Right ventricle myocardium superior (tissue), 1 donor: ENCODE measurements at regions of chr16 and their contacts with region 1.

Region 1: GRCh38 chr16:27367461-27368357 is 34.3 kb upstream of the IL21R start:
- DNase-seq: peak; percentile 88
- ATAC-seq: peak; percentile 93

Region 2: DNA sequence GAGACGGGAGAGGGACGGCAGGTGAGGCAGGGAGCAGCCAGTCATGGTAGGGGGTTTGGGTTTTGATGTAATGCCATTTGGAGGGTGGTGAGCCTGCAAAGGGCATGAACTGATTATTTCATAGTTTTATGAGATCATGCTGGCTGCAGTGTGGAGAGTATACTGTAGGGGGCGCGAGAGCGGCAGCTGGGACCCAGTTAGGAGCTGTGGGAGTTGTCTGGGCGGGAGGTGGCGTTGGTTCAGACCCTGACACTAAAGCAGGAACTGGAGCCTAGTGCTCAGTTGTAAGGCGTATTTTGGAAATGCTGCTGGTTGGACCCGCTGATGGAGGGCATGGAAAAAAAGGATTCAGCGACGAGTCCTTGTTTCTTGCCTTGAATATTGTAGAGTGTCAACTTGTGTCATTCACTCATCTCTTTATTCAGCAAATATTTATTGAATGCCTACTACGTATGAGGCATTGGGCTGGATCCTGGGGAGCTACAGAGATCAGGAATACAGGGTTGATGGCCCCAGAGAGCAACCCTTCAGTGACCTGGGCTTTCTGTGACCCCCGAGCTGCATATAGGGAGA is 188.1 kb before region 1 on chr16:
- intact Hi-C with region 1: loop called (anchors 2 kb)
- DNase-seq: peak; percentile 93
- ATAC-seq: peak; percentile 99

Region 3: GRCh38 chr16:27235055-27235937 is 132.4 kb before region 1 on chr16:
- intact Hi-C with region 1: loop called (anchors 5 kb)
- DNase-seq: peak; percentile 92
- ATAC-seq: peak; percentile 76

Region 4: DNA sequence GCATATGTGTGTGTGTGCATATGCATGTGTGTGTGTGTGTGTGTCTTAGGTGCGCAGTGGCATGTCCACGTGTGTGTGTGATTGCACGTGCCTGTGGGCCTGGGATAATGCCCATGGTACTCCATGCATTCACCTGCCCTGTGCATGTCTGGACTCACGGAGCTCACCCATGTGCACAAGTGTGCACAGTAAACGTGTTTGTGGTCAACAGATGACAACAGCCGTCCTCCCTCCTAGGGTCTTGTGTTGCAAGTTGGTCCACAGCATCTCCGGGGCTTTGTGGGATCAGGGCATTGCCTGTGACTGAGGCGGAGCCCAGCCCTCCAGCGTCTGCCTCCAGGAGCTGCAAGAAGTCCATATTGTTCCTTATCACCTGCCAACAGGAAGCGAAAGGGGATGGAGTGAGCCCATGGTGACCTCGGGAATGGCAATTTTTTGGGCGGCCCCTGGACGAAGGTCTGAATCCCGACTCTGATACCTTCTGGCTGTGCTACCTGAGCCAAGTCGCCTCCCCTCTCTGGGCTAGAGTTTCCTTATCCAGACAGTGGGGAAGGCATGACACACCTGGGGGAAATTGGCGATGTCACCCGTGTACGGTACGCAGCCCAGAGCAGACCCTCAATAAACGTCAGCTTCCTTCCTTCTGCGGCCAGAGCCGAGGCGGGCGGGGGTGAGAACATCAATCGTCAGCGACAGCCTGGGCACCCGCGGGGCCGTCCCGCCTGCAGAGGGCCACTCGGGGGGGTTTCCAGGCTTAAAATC is 81.9 kb after region 1 on chr16:
- intact Hi-C with region 1: no loop called
- DNase-seq: peak; percentile 41
- ATAC-seq: no peak